ENCODE measurements at regions of chr7 and their contacts with region 1.

Region 1: DNA sequence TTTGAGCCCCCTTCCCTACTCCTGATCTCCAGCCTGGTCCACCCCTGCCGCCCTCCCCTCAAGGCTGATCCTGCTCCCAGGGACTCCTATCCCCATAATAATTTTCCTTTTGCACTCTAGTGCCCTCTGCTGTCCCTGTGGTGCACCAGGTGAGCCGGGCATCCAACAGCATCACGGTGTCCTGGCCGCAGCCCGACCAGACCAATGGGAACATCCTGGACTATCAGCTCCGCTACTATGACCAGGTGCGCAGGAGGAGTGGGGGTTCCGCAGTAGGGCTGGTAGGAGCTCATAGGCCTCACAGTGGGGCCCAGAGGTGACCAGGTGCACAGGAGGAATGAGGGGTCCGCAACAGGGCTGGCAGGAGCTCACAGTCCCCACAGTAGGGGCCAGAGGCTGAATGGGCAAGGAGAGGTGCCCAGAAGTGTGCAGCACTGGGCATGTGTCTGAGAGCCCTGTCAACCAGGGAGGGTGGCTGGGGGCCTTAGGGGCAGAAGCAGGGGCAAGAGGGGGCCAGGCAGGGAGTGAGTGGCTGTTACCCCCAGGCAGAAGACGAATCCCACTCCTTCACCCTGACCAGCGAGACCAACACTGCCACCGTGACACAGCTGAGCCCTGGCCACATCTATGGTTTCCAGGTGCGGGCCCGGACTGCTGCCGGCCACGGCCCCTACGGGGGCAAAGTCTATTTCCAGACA is 11.6 kb downstream of the EPHB6 start:
- DNase-seq: peak; percentile 73
- H3K4me3 Mint-ChIP-seq: no peak overlapping the region
- H3K27ac Mint-ChIP-seq: no peak overlapping the region
- H3K4me1 Mint-ChIP-seq: peaks cover 5% of the 10 kb centered on the region
- H3K27me3 Mint-ChIP-seq: peaks cover 22% of the 10 kb centered on the region
- CTCF ChIP-seq: peak; percentile 61

Region 2: GRCh38 chr7:142771353-142771723 is 95.2 kb before region 1 on chr7:
- CTCF ChIA-PET with region 1: no interaction called
- POLR2A ChIA-PET with region 1: no interaction called
- intact Hi-C with region 1: no loop called
- DNase-seq: peak; percentile 30
- H3K4me3 Mint-ChIP-seq: no peak overlapping the region
- H3K27ac Mint-ChIP-seq: no peak overlapping the region
- H3K4me1 Mint-ChIP-seq: peaks cover 13% of the 10 kb centered on the region
- H3K27me3 Mint-ChIP-seq: peaks cover 63% of the 10 kb centered on the region
- CTCF ChIP-seq: no peak

Region 3: GRCh38 chr7:142817506-142817905 is 49.0 kb before region 1 on chr7:
- CTCF ChIA-PET with region 1: interaction called, 10 read pairs
- POLR2A ChIA-PET with region 1: no interaction called
- intact Hi-C with region 1: no loop called
- DNase-seq: no peak
- H3K4me3 Mint-ChIP-seq: no peak overlapping the region
- H3K27ac Mint-ChIP-seq: no peak overlapping the region
- H3K4me1 Mint-ChIP-seq: no peaks in the 10 kb centered on the region
- H3K27me3 Mint-ChIP-seq: peaks cover 100% of the 10 kb centered on the region
- CTCF ChIP-seq: no peak

Region 4: DNA sequence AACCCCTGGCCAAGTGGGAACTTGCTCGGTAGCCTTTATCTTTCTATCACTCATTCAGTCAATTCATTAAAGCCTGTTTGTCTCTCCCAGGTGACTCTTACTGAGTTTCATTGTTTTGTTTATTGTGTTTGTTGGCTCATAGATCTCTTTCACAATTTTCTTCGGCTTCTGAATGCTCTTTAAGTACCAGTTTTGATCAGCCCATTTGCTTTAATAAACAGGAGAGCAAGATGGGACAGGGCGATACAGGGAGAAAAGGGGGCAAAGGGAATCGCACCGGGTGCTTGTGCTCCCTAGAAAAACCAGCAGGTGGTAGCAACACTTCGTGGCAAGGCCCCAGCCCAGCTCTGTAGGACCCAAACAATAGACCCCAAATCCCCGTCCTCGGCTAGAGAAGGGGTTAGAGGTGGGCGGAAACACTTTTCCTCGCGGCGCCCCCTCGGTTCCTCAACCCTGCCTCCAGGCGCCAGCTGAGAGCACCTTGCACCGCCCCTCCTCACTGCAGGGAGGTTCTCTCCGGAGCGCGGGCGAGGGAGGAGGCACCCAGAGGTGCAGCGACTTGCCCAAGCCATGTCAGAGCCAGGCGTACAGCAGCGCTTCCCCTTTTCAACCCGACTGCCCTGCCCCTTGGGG is 12.7 kb before region 1 on chr7:
- CTCF ChIA-PET with region 1: interaction called, 66 read pairs
- POLR2A ChIA-PET with region 1: interaction called, 7 read pairs
- intact Hi-C with region 1: loop called (anchors 1 kb)
- DNase-seq: peak; percentile 76
- H3K4me3 Mint-ChIP-seq: peak overlapping the region; percentile 82
- H3K27ac Mint-ChIP-seq: peak overlapping the region; percentile 55
- H3K4me1 Mint-ChIP-seq: peaks cover 29% of the 10 kb centered on the region
- H3K27me3 Mint-ChIP-seq: peaks cover 51% of the 10 kb centered on the region
- CTCF ChIP-seq: peak; percentile 88

Measured in MCF 10A (cell line).